Activated CD4-positive, alpha-beta T cell treated with anti-CD3 and anti-CD28 coated beads for 36 hours (primary cell): ENCODE measurements at regions of chr6 and their contacts with region 1.

Region 1: GRCh38 chr6:149082286-149082707 is 235.2 kb upstream of the TAB2 start:
- DNase-seq: peak; percentile 94
- ATAC-seq: peak; percentile 79
- H3K4me3 Mint-ChIP-seq: no peak overlapping the region
- H3K27ac Mint-ChIP-seq: peak overlapping the region; percentile 52
- H3K4me1 Mint-ChIP-seq: peaks cover 51% of the 10 kb centered on the region
- H3K27me3 Mint-ChIP-seq: no peaks in the 10 kb centered on the region

Region 2: DNA sequence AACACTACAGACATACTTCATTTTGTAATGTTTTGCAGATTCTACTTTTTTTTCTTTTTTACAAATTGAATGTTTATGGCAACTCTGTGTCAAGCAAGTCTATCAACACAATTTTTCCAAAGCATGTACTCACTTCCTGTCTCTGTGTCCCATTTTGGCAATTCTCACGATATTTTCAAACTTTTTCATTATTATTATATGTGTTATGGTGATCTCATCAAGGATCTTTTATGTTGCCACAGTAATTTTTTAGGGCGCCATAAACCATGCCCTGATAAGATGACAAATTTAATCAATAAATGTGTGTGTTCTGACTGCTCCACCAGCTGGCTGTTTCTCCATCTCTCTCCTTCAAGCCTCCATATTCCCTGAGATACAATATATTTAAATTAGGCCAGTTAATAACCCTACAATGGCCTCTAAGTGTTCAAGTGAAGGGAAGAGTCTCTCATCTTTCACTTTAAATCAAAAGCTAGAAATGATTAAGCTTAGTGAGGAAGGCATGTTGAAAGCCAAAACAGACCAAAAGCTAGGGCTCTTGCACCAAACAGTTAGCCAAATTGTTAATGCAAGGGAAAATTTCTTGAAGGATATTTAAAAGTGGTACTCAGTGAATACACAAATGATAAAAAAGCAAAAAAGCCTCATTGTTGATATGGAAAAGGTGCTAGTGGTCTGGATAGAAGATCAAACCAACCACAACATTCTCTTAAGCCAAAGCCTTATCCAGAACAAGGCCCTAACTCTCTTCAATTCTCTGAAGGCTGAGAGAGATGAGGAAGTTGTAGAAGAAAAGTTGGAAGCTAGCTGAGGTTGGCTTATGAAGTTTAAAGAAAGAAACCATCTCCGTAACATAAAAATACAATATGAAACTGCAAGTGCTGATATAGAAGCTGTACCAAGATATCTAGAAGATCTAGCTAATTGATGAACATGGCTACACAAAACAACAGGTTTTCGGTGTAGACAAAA is 40.8 kb after region 1 on chr6:
- CTCF ChIA-PET with region 1: interaction called, 3 read pairs
- POLR2A ChIA-PET with region 1: no interaction called
- intact Hi-C with region 1: loop called in 1 of 2 experiments (anchors 2 kb)
- DNase-seq: no peak
- ATAC-seq: peak; percentile 33
- H3K4me3 Mint-ChIP-seq: no peak overlapping the region
- H3K27ac Mint-ChIP-seq: peak overlapping the region; percentile 76
- H3K4me1 Mint-ChIP-seq: peaks cover 37% of the 10 kb centered on the region
- H3K27me3 Mint-ChIP-seq: no peaks in the 10 kb centered on the region

Region 3: DNA sequence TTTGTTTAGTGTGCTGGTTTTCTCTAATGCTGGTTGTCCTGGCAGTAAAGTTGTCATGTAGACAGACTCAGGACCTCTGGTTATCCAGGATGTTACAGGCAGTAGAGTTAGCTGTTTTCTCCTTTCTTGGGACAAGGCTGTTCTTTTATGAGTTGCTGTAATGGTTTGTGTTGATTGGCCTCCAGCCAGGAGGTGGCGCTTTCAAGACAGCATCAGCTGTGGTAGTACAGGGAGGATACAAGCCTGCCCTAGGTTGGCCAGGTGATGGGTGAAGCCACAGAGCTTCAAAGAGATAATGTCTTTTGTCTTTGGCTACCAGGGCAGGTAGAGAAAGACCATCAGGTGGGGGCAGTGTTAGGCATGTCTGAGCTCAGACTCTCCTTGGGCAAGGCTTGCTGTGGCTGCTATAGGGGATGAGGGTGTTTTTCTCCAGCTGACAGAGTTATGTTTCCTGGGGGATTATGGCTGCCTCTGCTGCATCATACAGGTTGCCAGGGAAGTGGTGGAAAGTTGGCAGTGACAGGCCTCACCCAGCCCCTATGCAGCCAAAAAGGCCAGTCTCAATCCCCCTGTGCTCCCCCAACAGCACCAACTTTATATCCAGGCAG is 108.0 kb after region 1 on chr6:
- CTCF ChIA-PET with region 1: interaction called, 4 read pairs
- POLR2A ChIA-PET with region 1: no interaction called
- intact Hi-C with region 1: loop called in 1 of 2 experiments (anchors 1 kb)
- DNase-seq: peak; percentile 84
- ATAC-seq: peak; percentile 94
- H3K4me3 Mint-ChIP-seq: no peak overlapping the region
- H3K27ac Mint-ChIP-seq: peak overlapping the region; percentile 1
- H3K4me1 Mint-ChIP-seq: peaks cover 18% of the 10 kb centered on the region
- H3K27me3 Mint-ChIP-seq: no peaks in the 10 kb centered on the region

Region 4: DNA sequence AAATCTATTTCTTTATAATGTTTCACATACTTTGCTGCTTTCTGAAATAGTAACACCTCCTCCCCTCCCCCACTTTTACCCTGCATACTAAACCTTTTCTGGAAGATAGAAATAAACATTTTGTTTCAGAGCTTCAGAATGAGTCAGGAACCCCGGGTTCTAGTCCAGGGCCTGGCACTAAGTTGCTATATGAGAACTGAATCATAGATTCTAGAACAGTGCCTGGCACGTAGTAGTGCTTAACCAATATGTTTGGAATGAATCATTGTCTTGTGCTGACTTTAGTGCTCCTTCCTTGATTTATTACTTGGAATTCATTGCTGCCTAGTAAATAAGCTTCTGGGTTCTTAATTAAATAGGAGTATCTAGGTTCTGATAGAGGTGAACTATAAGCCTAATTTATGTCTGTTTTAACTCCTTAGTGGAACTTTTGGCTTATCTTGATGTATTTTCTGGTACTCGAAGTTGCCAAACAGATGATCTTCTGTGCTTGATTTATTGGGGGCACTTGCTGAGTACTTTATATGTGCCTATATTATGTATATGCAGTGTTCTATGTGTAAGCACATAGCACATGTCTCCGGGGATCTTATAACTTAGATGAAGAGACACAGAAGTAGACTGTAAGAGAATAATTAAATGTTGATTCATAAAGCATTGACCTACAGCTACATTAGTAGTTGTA is 253.8 kb after region 1 on chr6:
- CTCF ChIA-PET with region 1: interaction called, 5 read pairs
- POLR2A ChIA-PET with region 1: interaction called, 3 read pairs
- intact Hi-C with region 1: loop called in 1 of 2 experiments (anchors 5 kb)
- DNase-seq: peak; percentile 83
- ATAC-seq: peak; percentile 95
- H3K4me3 Mint-ChIP-seq: peak overlapping the region; percentile 59
- H3K27ac Mint-ChIP-seq: peak overlapping the region; percentile 99
- H3K4me1 Mint-ChIP-seq: peaks cover 85% of the 10 kb centered on the region
- H3K27me3 Mint-ChIP-seq: no peaks in the 10 kb centered on the region

Region 5: GRCh38 chr6:151029970-151030369 is 1947.7 kb after region 1 on chr6:
- CTCF ChIA-PET with region 1: no interaction called
- POLR2A ChIA-PET with region 1: no interaction called
- intact Hi-C with region 1: no loop called
- DNase-seq: no peak
- ATAC-seq: no peak
- H3K4me3 Mint-ChIP-seq: no peak overlapping the region
- H3K27ac Mint-ChIP-seq: no peak overlapping the region
- H3K4me1 Mint-ChIP-seq: peaks cover 5% of the 10 kb centered on the region
- H3K27me3 Mint-ChIP-seq: no peaks in the 10 kb centered on the region